ENCODE measurements at regions of chr17 and their contacts with region 1.

Region 1: GRCh38 chr17:58658804-58659713 is 32.8 kb downstream of the TEX14 start:
- DNase-seq: peak; percentile 74
- H3K4me3 Mint-ChIP-seq: peak overlapping the region; percentile 63
- H3K27ac Mint-ChIP-seq: peak overlapping the region; percentile 97
- H3K4me1 Mint-ChIP-seq: peaks cover 25% of the 10 kb centered on the region
- H3K27me3 Mint-ChIP-seq: peaks cover 7% of the 10 kb centered on the region

Region 2: GRCh38 chr17:58587702-58588254 is 71.3 kb before region 1 on chr17:
- intact Hi-C with region 1: loop called (anchors 1 kb)
- DNase-seq: peak; percentile 15
- H3K4me3 Mint-ChIP-seq: no peak overlapping the region
- H3K27ac Mint-ChIP-seq: no peak overlapping the region
- H3K4me1 Mint-ChIP-seq: no peaks in the 10 kb centered on the region
- H3K27me3 Mint-ChIP-seq: peaks cover 2% of the 10 kb centered on the region

Region 3: DNA sequence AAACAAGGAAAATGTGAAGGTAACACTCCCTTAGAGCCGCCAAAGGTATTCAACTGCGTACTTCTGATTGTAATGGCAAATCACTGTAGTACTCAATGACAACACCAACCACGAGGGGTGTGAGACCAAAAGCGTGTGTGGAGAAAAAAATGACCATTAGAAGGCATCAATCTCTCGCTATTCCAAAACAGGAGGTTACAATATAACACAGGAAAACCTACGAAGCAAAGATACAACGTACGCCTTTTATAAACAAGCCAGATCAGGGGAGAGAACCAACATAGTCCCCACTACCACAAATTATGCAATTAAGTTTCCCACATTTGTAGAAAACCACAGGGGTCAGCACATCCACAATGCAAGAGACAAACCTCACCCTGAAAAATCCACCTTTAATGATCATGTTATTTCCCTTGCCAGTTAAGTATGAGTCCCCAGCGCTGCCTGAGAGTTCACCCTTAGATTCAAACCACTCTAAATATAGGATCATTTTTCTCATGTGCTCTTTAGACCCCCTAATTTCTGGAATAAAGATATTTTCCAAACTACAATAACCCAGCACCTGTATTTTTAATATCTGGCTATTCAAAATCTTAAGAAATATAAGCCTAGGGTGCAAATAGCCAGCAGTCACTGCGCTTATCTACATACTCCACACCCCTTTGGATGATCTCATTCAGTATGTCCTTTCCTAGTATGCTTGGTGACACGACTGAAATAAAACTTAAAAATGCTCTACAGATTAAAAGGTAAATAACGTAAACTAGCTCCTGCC is 20.4 kb after region 1 on chr17:
- intact Hi-C with region 1: no loop called
- DNase-seq: no peak
- H3K4me3 Mint-ChIP-seq: no peak overlapping the region
- H3K27ac Mint-ChIP-seq: no peak overlapping the region
- H3K4me1 Mint-ChIP-seq: no peaks in the 10 kb centered on the region
- H3K27me3 Mint-ChIP-seq: peaks cover 6% of the 10 kb centered on the region

Region 4: DNA sequence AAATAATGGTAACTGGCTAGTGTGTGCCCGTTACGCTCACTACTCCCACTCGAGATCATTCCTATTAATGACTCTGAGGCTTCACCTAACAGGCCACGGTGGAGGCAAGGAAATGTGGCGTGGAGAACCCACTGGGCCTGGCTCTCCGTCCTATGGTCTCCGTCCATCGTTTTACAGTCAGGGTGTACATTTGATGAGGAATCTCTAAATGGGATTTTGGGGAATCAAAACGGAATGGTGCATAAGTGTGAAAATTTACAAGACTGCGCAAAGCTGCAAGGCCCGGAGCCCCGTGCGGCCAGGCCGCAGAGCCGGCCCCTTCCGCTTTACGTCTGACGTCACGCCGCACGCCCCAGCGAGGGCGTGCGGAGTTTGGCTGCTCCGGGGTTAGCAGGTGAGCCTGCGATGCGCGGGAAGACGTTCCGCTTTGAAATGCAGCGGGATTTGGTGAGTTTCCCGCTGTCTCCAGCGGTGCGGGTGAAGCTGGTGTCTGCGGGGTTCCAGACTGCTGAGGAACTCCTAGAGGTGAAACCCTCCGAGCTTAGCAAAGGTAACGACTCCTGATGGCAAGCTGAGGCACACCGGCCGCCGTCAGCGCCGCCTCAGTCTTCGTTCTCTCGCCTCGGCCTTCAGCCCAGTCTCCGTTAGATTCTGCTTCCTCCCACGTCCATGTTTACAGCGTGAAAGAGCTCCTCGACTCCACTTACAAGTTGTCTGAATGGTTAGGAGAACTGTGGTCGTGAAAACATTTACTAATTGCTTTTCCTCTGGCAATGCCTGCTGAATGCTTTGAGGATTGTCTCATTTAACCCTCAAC is 33.4 kb after region 1 on chr17 and contains the start of gene RAD51C:
- intact Hi-C with region 1: loop called (anchors 1 kb)
- DNase-seq: peak; percentile 86
- H3K4me3 Mint-ChIP-seq: peak within 1 kb of the TSS; percentile 97
- H3K27ac Mint-ChIP-seq: peak within 1 kb of the TSS; percentile 98
- H3K4me1 Mint-ChIP-seq: peaks cover 31% of the 10 kb centered on the region
- H3K27me3 Mint-ChIP-seq: no peaks in the 10 kb centered on the region
- total RNA-seq, gene RAD51C: 86.3 and 91.2 TPM in 2 replicates

Region 5: GRCh38 chr17:58703137-58703972 is 44.3 kb after region 1 on chr17:
- intact Hi-C with region 1: loop called (anchors 1 kb)
- DNase-seq: no peak
- H3K4me3 Mint-ChIP-seq: no peak overlapping the region
- H3K27ac Mint-ChIP-seq: peak overlapping the region; percentile 89
- H3K4me1 Mint-ChIP-seq: peaks cover 48% of the 10 kb centered on the region
- H3K27me3 Mint-ChIP-seq: no peaks in the 10 kb centered on the region

Region 6: DNA sequence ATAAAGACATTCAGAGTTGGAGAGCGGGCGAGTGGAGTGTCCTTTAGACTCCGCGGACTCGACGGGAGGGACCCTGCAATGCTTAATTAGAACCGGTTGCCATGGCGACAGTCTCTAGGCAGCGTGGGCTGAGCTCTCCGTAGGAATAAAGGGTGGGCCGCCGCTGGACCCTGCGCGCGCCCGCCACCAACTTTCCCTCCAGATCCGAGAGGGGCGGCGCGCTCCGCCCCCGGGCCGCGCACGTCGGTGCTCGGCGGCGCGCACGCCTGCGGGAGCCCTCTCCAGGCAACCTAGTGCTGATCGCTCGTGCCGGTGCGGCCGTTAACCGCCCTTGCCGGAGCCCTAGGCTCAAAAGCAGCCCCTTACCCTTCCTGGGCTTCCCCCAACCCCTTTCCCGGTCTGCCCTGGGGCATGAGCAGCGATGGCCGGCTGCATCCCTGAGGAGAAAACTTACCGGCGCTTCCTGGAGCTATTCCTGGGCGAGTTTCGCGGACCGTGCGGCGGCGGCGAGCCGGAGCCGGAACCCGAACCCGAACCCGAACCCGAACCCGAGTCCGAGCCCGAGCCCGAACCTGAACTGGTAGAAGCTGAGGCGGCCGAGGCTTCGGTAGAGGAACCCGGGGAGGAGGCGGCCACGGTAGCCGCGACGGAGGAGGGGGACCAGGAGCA is 96.7 kb after region 1 on chr17 and contains the start of gene PPM1E:
- intact Hi-C with region 1: loop called (anchors 2 kb)
- DNase-seq: peak; percentile 45
- H3K4me3 Mint-ChIP-seq: peak within 1 kb of the TSS; percentile 92
- H3K27ac Mint-ChIP-seq: peak within 1 kb of the TSS; percentile 52
- H3K4me1 Mint-ChIP-seq: peaks cover 12% of the 10 kb centered on the region
- H3K27me3 Mint-ChIP-seq: peaks cover 61% of the 10 kb centered on the region
- total RNA-seq, gene PPM1E: 0.03 TPM in 1 of 2 replicates, not detected in the other

Region 7: GRCh38 chr17:58800240-58800908 is 141.3 kb after region 1 on chr17:
- intact Hi-C with region 1: no loop called
- DNase-seq: no peak
- H3K4me3 Mint-ChIP-seq: no peak overlapping the region
- H3K27ac Mint-ChIP-seq: no peak overlapping the region
- H3K4me1 Mint-ChIP-seq: no peaks in the 10 kb centered on the region
- H3K27me3 Mint-ChIP-seq: peaks cover 8% of the 10 kb centered on the region

Region 8: GRCh38 chr17:59155439-59156182 is 496.6 kb after region 1 on chr17 and contains the start of gene PRR11:
- intact Hi-C with region 1: loop called (anchors 1 kb)
- DNase-seq: peak; percentile 94
- H3K4me3 Mint-ChIP-seq: no peak within 1 kb of the TSS
- H3K27ac Mint-ChIP-seq: no peak within 1 kb of the TSS
- H3K4me1 Mint-ChIP-seq: peaks cover 63% of the 10 kb centered on the region
- H3K27me3 Mint-ChIP-seq: no peaks in the 10 kb centered on the region
- total RNA-seq, gene PRR11: 29.4 and 32.7 TPM in 2 replicates